Panc1 (cell line): ENCODE measurements at regions of chr3 and their contacts with region 1.

Region 1: GRCh38 chr3:49253512-49253911 is 23.5 kb downstream of the C3orf62 start:
- DNase-seq: no peak
- ATAC-seq: no peak
- H3K4me3 ChIP-seq: no peak overlapping the region
- H3K27ac ChIP-seq: no peak overlapping the region
- H3K4me1 ChIP-seq: no peaks in the 10 kb centered on the region
- H3K27me3 ChIP-seq: no peaks in the 10 kb centered on the region
- CTCF ChIP-seq: no peak

Region 2: DNA sequence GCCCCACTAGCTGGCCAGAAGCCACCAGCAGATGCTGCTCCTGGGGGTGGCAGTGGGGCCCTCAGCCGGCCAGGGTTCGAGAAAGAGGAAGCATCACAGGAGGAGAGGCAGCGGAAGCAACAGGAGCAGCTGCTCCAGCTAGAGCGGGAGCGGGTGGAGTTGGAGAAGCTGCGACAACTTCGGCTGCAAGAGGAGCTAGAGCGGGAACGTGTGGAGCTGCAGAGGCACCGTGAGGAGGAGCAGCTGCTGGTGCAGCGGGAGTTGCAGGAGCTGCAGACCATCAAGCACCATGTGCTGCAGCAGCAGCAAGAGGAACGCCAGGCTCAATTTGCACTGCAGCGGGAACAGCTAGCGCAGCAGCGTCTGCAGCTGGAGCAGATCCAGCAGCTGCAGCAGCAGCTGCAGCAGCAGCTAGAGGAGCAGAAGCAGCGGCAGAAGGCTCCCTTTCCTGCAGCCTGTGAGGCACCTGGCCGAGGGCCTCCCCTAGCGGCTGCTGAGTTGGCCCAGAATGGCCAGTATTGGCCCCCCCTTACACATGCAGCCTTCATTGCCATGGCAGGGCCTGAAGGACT is 403.1 kb after region 1 on chr3:
- CTCF ChIA-PET with region 1: no interaction called
- POLR2A ChIA-PET with region 1: interaction called, 16 read pairs
- in situ Hi-C with region 1: no loop called
- intact Hi-C with region 1: no loop called
- DNase-seq: no peak
- ATAC-seq: no peak
- H3K4me3 ChIP-seq: no peak overlapping the region
- H3K27ac ChIP-seq: no peak overlapping the region
- H3K4me1 ChIP-seq: no peaks in the 10 kb centered on the region
- H3K27me3 ChIP-seq: no peaks in the 10 kb centered on the region
- CTCF ChIP-seq: no peak